Activated CD8-positive, alpha-beta memory T cell treated with anti-CD3 and anti-CD28 coated beads, Interleukin-2, amount 10 ng/mL, durations not matched to agents 7 days and 5 days (primary cell): ENCODE measurements at regions of chr17 and their contacts with region 1.

Region 1: DNA sequence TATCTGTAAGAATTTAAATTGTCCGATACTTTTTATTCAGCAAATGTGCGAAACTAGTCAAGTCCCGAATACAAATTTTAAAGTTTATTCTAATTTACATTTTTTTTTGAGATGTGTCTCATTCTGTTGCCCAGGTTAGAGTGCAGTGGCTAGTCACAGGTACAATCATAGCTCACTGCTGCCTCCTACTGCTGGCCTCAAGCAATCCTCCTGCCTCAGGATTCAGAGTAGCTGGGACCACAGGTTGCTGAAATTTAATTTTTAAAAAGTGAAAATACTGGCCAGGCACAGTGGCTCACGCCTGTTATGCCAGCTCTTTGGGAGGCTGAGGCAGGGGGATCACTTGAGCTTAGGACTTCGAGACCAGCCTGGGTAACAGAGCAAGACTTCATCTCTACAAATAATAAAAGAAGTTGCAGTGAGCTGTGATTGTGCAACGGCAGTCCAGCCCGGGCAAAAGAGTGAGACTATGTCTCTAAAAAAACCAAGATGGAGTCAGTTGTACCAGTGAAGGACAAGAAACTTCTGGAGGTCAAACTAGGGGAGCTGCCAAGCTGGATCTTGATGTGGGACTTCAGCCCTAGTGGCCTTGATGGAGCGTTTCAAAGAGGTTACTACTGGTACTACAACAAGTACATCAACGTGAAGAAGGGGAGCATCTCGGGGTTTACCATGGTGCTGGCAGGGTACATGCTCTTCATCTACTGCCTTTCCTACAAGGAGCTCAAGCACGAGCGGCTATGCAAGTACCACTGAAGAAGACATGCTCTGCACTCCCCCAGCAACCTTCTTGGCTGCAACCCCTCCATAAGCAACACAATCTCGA is 5.6 kb downstream of the POLG2 start:
- DNase-seq: peak; percentile 76
- ATAC-seq: peak; percentile 55
- H3K4me3 Mint-ChIP-seq: no peak overlapping the region
- H3K27ac Mint-ChIP-seq: no peak overlapping the region
- H3K4me1 Mint-ChIP-seq: peaks cover 34% of the 10 kb centered on the region
- H3K27me3 Mint-ChIP-seq: no peaks in the 10 kb centered on the region

Region 2: DNA sequence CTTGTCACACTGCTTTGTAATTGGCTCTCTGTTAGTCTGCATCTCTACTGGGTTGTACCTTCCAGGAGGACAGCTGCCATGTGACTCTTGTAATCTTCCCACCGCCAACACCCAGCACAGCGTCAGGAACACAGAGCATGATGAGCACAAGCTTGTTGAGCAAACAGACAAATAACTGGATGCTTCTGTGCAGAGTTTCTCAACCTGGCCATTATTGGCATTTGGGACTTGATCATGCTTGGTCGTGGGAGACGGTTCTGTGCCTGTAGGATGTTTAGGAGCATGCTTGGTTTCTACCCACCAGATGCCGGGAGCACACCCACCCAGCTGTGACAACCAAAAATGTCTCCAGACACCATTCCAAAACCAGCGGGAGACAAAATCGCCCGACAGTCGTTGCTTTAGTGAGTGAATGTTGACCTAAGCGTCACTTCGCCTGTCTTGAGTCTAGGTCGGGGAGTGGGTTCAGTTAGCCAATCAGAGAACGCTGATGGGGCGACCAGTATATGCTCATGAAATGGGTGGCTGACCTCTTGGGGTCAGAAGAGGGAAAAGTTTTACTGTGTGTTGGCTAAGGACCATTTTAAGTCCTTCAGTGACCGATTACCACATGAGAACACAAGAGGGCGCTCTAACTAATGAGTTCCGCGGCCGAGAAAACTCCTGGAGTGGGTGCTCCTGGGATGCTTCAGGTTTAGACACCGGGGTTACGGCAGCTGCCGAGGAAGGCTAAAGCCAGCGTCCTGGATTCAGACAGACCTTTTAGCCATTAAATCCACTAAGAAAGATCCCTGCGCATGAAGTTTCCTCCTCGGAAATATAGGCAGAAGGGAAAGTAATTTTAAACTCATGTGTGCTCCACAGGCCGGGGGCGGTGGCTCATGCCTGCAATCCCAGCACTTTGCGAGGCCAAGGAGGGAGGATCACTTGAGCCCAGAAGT is 170.4 kb before region 1 on chr17:
- CTCF ChIA-PET with region 1: interaction called, 18 read pairs
- DNase-seq: peak; percentile 69
- ATAC-seq: peak; percentile 72
- H3K4me3 Mint-ChIP-seq: no peak overlapping the region
- H3K27ac Mint-ChIP-seq: no peak overlapping the region
- H3K4me1 Mint-ChIP-seq: peaks cover 3% of the 10 kb centered on the region
- H3K27me3 Mint-ChIP-seq: peaks cover 29% of the 10 kb centered on the region

Region 3: GRCh38 chr17:64459284-64459747 is 31.9 kb before region 1 on chr17:
- CTCF ChIA-PET with region 1: interaction called, 14 read pairs
- DNase-seq: no peak
- ATAC-seq: no peak
- H3K4me3 Mint-ChIP-seq: no peak overlapping the region
- H3K27ac Mint-ChIP-seq: no peak overlapping the region
- H3K4me1 Mint-ChIP-seq: peaks cover 14% of the 10 kb centered on the region
- H3K27me3 Mint-ChIP-seq: peaks cover 3% of the 10 kb centered on the region

Region 4: GRCh38 chr17:64506576-64507477 is 15.6 kb after region 1 on chr17 and contains the start of gene CEP95:
- CTCF ChIA-PET with region 1: interaction called, 68 read pairs
- DNase-seq: peak; percentile 98
- ATAC-seq: peak; percentile 72
- H3K4me3 Mint-ChIP-seq: peak within 1 kb of the TSS; percentile 100
- H3K27ac Mint-ChIP-seq: peak within 1 kb of the TSS; percentile 100
- H3K4me1 Mint-ChIP-seq: peaks cover 51% of the 10 kb centered on the region
- H3K27me3 Mint-ChIP-seq: peaks cover 2% of the 10 kb centered on the region
- total RNA-seq, gene CEP95: 45.7 to 52.6 TPM

Region 5: DNA sequence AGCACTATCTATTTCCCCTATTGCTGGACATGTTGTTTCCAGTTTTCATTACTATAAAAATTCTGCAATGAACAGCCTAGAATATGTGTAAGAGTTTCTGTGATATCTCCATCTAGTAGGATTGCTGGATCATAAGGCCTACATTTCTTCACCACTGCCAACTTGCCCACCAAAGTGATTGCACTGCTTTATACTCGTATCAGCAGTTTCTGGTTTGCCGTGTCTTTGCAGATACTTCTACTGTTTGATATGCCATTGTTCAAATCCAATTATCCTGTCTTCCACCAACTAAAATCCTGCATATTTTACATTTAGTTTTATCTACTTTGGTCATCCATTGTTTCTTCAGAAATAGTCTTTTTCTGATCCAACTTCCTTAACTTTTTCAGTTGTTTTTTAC is 36.7 kb after region 1 on chr17:
- CTCF ChIA-PET with region 1: no interaction called
- DNase-seq: no peak
- ATAC-seq: no peak
- H3K4me3 Mint-ChIP-seq: no peak overlapping the region
- H3K27ac Mint-ChIP-seq: no peak overlapping the region
- H3K4me1 Mint-ChIP-seq: no peaks in the 10 kb centered on the region
- H3K27me3 Mint-ChIP-seq: no peaks in the 10 kb centered on the region

Region 6: DNA sequence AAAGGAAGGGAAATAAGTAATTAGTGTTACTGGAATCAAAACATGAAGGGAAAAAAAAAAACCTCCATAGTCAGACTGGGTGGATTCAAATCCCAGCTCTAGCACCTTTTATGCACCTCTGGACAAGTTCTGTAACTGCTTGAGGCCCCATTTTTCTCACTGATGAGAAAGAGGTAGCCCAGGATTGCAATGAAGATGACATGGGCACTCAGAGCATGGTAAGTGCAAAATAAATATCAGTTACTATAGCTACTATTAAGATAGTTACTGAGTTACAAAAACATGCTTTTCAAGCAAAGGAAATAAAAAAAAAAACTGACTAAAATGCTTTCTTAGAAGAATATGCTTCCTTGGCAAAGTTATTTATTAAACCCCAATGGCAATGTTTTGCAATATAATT is 74.3 kb after region 1 on chr17:
- CTCF ChIA-PET with region 1: no interaction called
- DNase-seq: no peak
- ATAC-seq: no peak
- H3K4me3 Mint-ChIP-seq: no peak overlapping the region
- H3K27ac Mint-ChIP-seq: no peak overlapping the region
- H3K4me1 Mint-ChIP-seq: peaks cover 5% of the 10 kb centered on the region
- H3K27me3 Mint-ChIP-seq: no peaks in the 10 kb centered on the region

Region 7: GRCh38 chr17:64653325-64653984 is 162.2 kb after region 1 on chr17:
- CTCF ChIA-PET with region 1: interaction called, 11 read pairs
- DNase-seq: no peak
- ATAC-seq: no peak
- H3K4me3 Mint-ChIP-seq: peak overlapping the region; percentile 58
- H3K27ac Mint-ChIP-seq: peak overlapping the region; percentile 84
- H3K4me1 Mint-ChIP-seq: peaks cover 51% of the 10 kb centered on the region
- H3K27me3 Mint-ChIP-seq: no peaks in the 10 kb centered on the region